ENCODE measurements at regions of chr2 and their contacts with region 1.

Region 1: GRCh38 chr2:46171411-46171953 is 125.7 kb upstream of the EPAS1 start:
- DNase-seq: peak; percentile 87
- H3K4me3 ChIP-seq: no peak overlapping the region
- H3K27ac ChIP-seq: peak overlapping the region; percentile 84
- H3K4me1 ChIP-seq: peaks cover 49% of the 10 kb centered on the region
- H3K27me3 ChIP-seq: no peaks in the 10 kb centered on the region
- CTCF ChIP-seq: no peak

Region 2: GRCh38 chr2:45938649-45939511 is 232.6 kb before region 1 on chr2:
- CTCF ChIA-PET with region 1: no interaction called
- dilution Hi-C with region 1: no loop called
- in situ Hi-C with region 1: no loop called
- intact Hi-C with region 1: no loop called
- DNase-seq: peak; percentile 88
- H3K4me3 ChIP-seq: no peak overlapping the region
- H3K27ac ChIP-seq: peak overlapping the region; percentile 16
- H3K4me1 ChIP-seq: peaks cover 32% of the 10 kb centered on the region
- H3K27me3 ChIP-seq: no peaks in the 10 kb centered on the region
- CTCF ChIP-seq: no peak

Region 3: GRCh38 chr2:46010925-46011490 is 160.5 kb before region 1 on chr2:
- CTCF ChIA-PET with region 1: no interaction called
- dilution Hi-C with region 1: no loop called
- in situ Hi-C with region 1: no loop called
- intact Hi-C with region 1: loop called (anchors 5 kb)
- DNase-seq: peak; percentile 37
- H3K4me3 ChIP-seq: no peak overlapping the region
- H3K27ac ChIP-seq: no peak overlapping the region
- H3K4me1 ChIP-seq: peaks cover 36% of the 10 kb centered on the region
- H3K27me3 ChIP-seq: no peaks in the 10 kb centered on the region
- CTCF ChIP-seq: peak; percentile 62 to 69

Region 4: DNA sequence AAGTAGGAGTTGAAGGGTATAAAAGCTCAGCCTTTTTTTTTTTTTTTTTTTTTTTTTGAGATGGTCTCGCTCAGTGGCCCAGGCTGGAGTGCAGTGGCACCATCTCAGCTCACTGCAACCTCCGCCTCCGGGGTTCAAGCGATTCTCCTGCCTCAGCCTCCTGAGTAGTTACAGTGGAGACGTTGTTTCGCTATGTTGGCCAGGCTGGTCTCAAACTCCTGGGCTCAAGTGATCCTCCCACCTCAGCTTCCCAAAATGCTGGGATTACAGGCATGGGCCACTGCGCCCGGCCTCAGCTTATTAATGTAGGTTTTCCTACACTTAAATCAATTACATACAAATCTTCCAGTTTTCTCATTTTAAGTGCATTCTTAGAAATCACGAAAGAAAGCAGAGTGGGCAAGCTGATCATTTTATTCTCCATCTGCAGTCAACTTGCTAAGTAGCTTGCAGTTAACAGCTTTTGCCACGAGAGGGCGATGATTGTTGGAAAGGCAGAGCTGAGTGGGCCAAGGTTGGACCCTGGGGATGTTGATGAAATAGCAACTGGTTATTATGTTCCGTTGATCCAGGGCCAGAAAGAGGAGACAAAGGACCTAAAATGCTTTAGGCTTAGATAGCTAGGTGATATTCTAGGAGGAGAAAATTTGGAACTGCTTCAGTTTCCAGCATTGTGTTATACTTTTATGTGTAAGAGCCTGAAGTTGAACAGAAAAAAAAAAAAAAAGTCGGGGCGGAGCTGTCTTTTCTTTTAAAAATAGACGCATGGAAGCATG is 108.7 kb before region 1 on chr2:
- CTCF ChIA-PET with region 1: interaction called, 6 read pairs
- dilution Hi-C with region 1: no loop called
- in situ Hi-C with region 1: no loop called
- intact Hi-C with region 1: loop called (anchors 2 kb)
- DNase-seq: peak; percentile 53
- H3K4me3 ChIP-seq: no peak overlapping the region
- H3K27ac ChIP-seq: no peak overlapping the region
- H3K4me1 ChIP-seq: peaks cover 4% of the 10 kb centered on the region
- H3K27me3 ChIP-seq: no peaks in the 10 kb centered on the region
- CTCF ChIP-seq: peak; percentile 85 to 92

Region 5: DNA sequence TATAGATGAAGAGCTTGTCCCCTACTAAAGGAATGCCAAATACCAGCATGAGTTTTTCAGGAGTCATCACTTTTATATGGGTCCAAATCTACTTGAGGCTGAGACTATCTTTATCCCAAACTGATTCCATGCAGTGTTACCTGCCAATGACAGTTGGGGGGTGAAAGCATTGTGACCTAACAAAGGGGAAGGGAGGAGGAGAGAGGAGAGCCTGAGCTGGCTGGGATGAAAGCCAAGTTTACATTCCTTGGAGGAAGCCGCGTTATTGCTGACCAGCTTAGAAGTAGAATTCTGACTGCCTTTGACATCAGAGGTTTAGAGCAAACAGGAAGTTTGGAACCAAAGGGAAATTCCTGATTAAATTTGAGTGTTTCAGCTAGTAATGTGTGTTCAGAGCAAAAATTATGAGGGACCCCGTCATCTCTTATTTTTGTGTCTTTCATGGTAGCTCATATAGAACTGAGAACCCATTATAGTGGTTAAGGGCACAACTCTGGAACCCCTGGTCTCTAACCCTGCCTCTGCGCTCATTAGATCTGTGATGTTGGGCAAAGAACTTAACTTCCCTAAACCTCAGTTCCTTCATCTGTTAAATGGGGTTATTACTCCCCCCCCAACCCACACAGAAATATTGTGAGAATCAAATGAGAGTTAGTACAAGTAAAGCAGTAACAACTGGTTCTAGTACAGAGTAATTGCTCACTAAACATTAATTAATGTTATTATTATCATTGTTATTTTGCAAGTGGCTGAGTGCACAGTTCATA is 73.6 kb before region 1 on chr2:
- CTCF ChIA-PET with region 1: no interaction called
- dilution Hi-C with region 1: no loop called
- in situ Hi-C with region 1: no loop called
- intact Hi-C with region 1: loop called (anchors 5 kb)
- DNase-seq: peak; percentile 92
- H3K4me3 ChIP-seq: no peak overlapping the region
- H3K27ac ChIP-seq: peak overlapping the region; percentile 89
- H3K4me1 ChIP-seq: peaks cover 23% of the 10 kb centered on the region
- H3K27me3 ChIP-seq: no peaks in the 10 kb centered on the region
- CTCF ChIP-seq: no peak

Region 6: GRCh38 chr2:46198154-46198853 is 26.8 kb after region 1 on chr2:
- CTCF ChIA-PET with region 1: no interaction called
- dilution Hi-C with region 1: no loop called
- in situ Hi-C with region 1: no loop called
- intact Hi-C with region 1: loop called (anchors 2 kb)
- DNase-seq: peak; percentile 73
- H3K4me3 ChIP-seq: no peak overlapping the region
- H3K27ac ChIP-seq: peak overlapping the region; percentile 13
- H3K4me1 ChIP-seq: peaks cover 17% of the 10 kb centered on the region
- H3K27me3 ChIP-seq: no peaks in the 10 kb centered on the region
- CTCF ChIP-seq: no peak

Region 7: DNA sequence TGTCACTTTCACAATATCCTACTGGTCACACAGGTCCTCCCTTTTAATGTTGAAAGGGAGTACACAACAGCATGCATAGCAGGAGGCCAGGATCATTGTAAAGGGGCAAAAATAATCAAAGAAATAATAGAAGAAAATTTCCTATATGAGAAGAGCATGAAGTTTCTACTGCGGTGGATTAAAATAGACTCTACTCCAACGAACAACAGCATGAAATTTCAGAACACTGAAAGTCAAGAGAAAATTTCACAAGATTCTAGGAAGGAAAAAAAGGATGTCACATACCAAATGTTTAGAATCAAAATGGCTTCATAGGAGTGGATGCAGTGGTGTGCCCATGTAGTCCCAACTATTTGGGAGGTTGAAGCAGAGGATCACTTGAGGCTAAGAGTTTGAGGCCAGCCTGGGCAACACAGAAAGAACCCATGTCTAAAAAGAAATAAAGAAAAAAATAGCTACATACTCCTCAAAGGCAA is 53.7 kb after region 1 on chr2:
- CTCF ChIA-PET with region 1: no interaction called
- dilution Hi-C with region 1: no loop called
- in situ Hi-C with region 1: no loop called
- intact Hi-C with region 1: loop called (anchors 2 kb)
- DNase-seq: no peak
- H3K4me3 ChIP-seq: no peak overlapping the region
- H3K27ac ChIP-seq: peak overlapping the region; percentile 64
- H3K4me1 ChIP-seq: peaks cover 9% of the 10 kb centered on the region
- H3K27me3 ChIP-seq: no peaks in the 10 kb centered on the region
- CTCF ChIP-seq: no peak

Measured in mammary epithelial cell (primary cell).